GM12878 (cell line): ENCODE measurements at regions of chr12 and their contacts with region 1.

Region 1: DNA sequence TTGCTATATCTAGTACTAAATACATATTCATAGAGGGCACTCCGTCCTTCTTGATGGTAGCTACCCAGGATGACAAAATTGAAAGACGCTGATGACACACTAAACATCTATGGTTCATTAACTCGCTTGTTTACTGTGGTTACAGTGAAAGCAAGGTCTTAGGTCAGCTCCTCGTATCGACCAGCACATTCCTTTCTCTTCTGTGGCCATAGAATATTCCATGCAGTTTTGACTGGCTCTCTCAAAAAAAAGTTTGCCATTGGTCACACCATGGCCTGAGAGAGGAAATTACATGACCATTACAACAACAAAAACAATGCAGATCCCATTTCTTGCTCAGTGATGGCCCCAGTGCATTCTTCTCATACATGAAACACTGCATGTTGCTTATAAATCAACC is 411.4 kb upstream of the SOX5 start:
- DNase-seq: peak; percentile 30
- ATAC-seq: peak; percentile 90
- H3K4me3 ChIP-seq: no peak overlapping the region
- H3K27ac ChIP-seq: no peak overlapping the region
- H3K4me1 ChIP-seq: peaks cover 7% of the 10 kb centered on the region; the same call in 1 of the 2 replicates
- H3K27me3 ChIP-seq: peaks cover 0 to 3% of the 10 kb centered on the region in 2 experiments; a peak in 2 of 4 replicates
- CTCF ChIP-seq: no peak
- EP300 ChIP-seq: peak in 1 of 2 experiments; percentile 10; a peak in 1 of 4 replicates
- POLR2A ChIP-seq: no peak
- RAD21 ChIP-seq: no peak

Region 2: DNA sequence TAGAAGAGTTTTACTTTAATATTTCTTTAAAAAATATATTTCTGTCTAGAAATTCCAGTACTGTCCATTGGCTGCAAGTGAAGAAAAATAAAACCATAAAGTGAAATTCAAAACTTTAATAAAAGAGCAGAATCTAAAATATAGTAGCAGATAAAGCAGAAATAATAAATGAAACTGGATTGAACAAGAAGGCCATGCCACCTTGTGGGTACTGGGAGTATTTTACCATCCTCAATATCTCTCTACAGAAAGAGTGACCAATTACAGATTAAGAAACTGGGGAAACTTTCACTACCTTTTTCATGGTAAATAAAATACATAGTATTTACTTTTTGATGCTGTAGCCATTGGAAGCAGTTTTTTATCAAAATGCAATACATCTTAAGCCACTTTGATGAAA is 367.5 kb after region 1 on chr12:
- CTCF ChIA-PET with region 1: no interaction called
- POLR2A ChIA-PET with region 1: no interaction called
- RAD21 ChIA-PET with region 1: no interaction called
- SMC1A ChIA-PET with region 1: no interaction called
- in situ Hi-C with region 1: no loop called
- intact Hi-C with region 1: loop called (anchors 5 kb)
- DNase-seq: no peak
- ATAC-seq: peak; percentile 82
- H3K4me3 ChIP-seq: no peak overlapping the region
- H3K27ac ChIP-seq: no peak overlapping the region
- H3K4me1 ChIP-seq: peaks cover 7% of the 10 kb centered on the region
- H3K27me3 ChIP-seq: peaks cover 0 to 5% of the 10 kb centered on the region in 2 experiments; a peak in 2 of 4 replicates
- CTCF ChIP-seq: peak; percentile 43 to 47 (median 44); a peak in 5 of 6 replicates
- EP300 ChIP-seq: no peak
- POLR2A ChIP-seq: no peak
- RAD21 ChIP-seq: peak; percentile 76